A549 (cell line): ENCODE measurements at regions of chr17 and their contacts with region 1.

Region 1: GRCh38 chr17:40846515-40847155 is 20.4 kb downstream of the KRT12 start:
- DNase-seq: no peak
- ATAC-seq: peak in 1 of 2 experiments; percentile 45; a peak in 1 of 6 replicates
- H3K4me3 ChIP-seq: no peak overlapping the region
- H3K27ac ChIP-seq: no peak overlapping the region
- H3K4me1 ChIP-seq: peaks cover 32% of the 10 kb centered on the region
- CTCF ChIP-seq: no peak
- EP300 ChIP-seq: no peak
- POLR2A ChIP-seq: no peak
- RAD21 ChIP-seq: no peak

Region 2: DNA sequence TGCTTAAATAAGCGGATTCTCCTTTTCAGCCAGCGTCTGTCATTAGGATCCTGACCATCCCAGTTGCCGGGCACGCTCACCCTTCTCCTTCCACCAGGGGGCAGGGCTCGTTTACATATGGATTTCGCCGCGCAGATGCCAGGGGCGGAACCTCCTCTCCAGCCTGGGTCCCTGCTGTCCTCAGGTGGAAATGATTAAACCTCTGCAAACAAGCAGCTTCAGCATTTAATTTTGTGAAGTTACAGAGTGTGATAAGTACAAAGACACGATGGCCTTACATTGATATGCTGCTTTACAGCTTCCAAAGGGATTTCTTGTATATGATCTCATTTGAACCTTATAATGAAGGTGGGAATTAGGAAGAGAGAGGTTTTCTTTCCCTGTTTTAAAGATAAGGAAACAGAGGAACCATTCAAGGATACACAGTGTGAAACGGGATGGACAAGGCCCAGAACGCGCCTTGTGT is 43.0 kb before region 1 on chr17:
- CTCF ChIA-PET with region 1: interaction called, 19 read pairs
- POLR2A ChIA-PET with region 1: no interaction called
- DNase-seq: peak; percentile 88 to 96
- ATAC-seq: peak; percentile 99
- H3K4me3 ChIP-seq: no peak overlapping the region
- H3K27ac ChIP-seq: peak overlapping the region; percentile 27 to 56; a peak in 4 of 6 replicates
- H3K4me1 ChIP-seq: peaks cover 7% of the 10 kb centered on the region
- CTCF ChIP-seq: peak; percentile 98
- EP300 ChIP-seq: no peak
- POLR2A ChIP-seq: no peak
- RAD21 ChIP-seq: peak; percentile 100

Region 3: DNA sequence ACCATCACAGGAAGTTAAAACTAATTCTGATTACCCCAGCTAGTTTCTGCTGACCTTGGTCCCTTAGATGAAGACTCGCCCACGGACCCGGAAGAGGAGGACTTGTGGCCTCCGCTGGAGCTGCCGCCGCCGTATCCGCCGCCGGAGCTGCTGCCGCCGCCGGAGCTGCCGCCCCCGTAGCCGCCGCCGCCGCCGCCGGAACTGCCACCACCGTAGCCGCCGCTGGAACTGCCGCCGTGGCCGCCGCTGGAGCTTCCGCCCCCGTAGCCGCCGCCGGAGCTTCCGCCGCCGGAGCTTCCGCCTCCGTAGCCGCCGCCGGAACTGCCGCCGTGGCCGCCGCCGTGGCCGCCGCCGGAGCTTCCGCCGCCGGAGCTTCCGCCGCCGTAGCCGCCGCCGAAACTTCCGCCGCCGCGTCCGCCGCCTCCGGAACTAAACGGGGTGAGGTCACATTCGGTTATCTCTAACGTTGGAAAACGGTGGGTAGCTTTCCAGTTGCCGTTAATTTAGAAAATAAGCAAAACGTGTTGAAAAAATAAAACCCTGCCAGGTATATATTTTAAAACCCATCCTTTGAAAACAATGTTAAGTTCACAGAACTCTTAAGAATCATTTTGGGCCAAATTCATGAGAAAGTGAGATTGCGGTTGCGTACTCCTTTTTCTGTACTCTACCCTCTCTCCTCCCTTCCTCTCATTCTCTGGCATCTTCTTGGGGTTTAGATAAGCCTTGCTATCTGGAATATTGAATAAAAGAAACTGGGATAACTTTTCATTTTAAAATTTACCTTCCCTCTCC is 27.7 kb before region 1 on chr17:
- CTCF ChIA-PET with region 1: interaction called, 10 read pairs
- POLR2A ChIA-PET with region 1: interaction called, 4 read pairs
- DNase-seq: peak; percentile 80 to 88
- ATAC-seq: peak; percentile 93 to 95
- H3K4me3 ChIP-seq: peak overlapping the region; percentile 79
- H3K27ac ChIP-seq: peak overlapping the region; percentile 86 to 94
- H3K4me1 ChIP-seq: peaks cover 16% of the 10 kb centered on the region
- CTCF ChIP-seq: no peak
- EP300 ChIP-seq: no peak
- POLR2A ChIP-seq: peak; percentile 41
- RAD21 ChIP-seq: no peak; a peak in 1 of 5 replicates

Region 4: DNA sequence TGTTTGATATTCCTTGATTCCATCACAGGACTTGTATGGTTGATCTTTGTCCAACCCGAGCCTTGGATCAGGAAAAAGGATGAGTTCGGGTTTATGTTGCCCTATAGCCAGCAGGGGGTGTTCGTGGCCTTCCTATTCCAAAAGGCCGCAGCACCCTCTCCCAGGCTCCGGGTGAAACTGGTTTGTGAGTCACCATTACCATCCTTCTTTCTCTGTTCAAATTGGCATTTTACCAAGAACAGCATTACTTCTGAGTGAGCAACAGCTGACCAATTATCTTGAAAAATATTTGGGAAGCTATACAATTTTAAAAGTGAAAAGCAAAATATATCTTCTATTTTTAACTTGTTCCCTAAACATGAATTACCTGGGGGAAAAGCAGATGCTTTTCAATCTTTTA is 62.7 kb after region 1 on chr17:
- CTCF ChIA-PET with region 1: no interaction called
- POLR2A ChIA-PET with region 1: no interaction called
- DNase-seq: peak; percentile 91 to 92
- ATAC-seq: peak; percentile 91 to 95
- H3K4me3 ChIP-seq: no peak overlapping the region
- H3K27ac ChIP-seq: peak overlapping the region; percentile 62 to 65
- H3K4me1 ChIP-seq: peaks cover 31% of the 10 kb centered on the region
- CTCF ChIP-seq: peak; percentile 98
- EP300 ChIP-seq: no peak
- POLR2A ChIP-seq: no peak
- RAD21 ChIP-seq: peak; percentile 99 to 100

Region 5: GRCh38 chr17:40963838-40964237 is 117.2 kb after region 1 on chr17:
- CTCF ChIA-PET with region 1: no interaction called
- POLR2A ChIA-PET with region 1: no interaction called
- DNase-seq: peak; percentile 37 to 46
- ATAC-seq: peak; percentile 68 to 79; a peak in 5 of 6 replicates
- H3K4me3 ChIP-seq: no peak overlapping the region
- H3K27ac ChIP-seq: no peak overlapping the region
- H3K4me1 ChIP-seq: no peaks in the 10 kb centered on the region
- CTCF ChIP-seq: peak; percentile 45
- EP300 ChIP-seq: no peak
- POLR2A ChIP-seq: no peak
- RAD21 ChIP-seq: peak; percentile 17 to 49; a peak in 2 of 5 replicates